Mammary epithelial cell (primary cell): ENCODE measurements at regions of chr3 and their contacts with region 1.

Region 1: DNA sequence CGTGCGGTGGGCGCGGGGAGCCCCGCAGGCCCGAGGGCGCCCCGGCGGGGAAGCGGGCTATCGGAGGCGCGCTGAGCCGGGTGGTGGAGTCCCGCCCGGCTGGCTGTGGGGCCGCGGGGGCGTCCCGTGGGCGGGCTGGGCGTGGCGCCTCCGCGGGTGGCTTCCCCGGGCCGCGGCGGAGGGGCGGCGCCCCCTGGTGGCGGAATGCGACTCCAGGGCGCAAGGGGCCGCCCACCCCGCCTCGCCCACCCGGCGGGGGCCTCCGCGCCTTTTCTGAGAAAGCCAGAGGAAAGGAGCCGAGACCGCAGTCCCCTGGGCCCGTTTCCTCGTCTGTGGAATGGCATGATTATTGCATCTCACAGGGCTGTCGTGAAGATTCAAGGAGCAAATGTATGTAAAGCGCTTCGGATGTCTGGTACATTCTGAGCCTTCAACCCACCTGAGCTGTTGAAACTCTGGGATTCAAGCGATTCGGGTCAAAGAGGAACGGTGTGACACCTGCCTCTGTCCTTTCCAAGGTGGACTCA is 31.9 kb upstream of the RAB6B start:
- DNase-seq: no peak
- H3K4me3 ChIP-seq: peak overlapping the region in 2 of 3 experiments; percentile 17 to 46
- H3K27ac ChIP-seq: no peak overlapping the region
- H3K4me1 ChIP-seq: peaks cover 10% of the 10 kb centered on the region
- H3K27me3 ChIP-seq: peaks cover 10% of the 10 kb centered on the region
- CTCF ChIP-seq: peak; percentile 37 to 59

Region 2: DNA sequence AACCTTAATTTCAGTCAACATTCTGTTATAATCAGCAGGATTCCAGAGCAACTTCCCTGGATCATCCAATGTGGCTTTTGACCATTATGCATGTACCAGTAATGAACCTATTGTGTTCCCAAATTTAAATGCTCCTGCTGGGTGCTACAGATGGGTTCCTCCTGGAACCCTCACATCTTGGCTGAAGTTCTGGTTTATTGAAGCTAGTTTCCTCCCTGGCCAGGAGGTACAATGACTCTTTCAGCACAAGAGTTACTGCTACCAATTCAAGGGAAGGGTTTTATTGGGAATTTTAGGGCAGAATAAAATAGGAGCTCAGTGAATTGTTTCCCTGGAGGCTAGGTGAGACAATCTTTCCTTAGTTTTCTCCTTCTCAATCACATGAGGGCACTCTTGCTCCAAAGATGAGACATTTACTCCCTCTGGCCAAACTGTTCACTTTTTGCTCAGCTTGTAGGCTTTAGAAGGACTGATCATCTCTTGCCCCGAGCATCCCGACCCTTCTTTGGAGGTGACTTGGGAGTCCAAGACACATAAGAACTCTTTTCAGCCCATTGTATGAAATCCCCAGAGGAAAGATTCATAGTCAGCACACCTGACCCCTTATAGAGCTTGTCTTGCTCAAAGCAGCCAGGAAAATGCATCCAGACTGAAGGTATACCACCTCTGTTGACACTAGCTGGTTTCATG is 1196.6 kb before region 1 on chr3:
- CTCF ChIA-PET with region 1: no interaction called
- dilution Hi-C with region 1: no loop called
- in situ Hi-C with region 1: loop called in 1 of 2 experiments (anchors 25 kb)
- intact Hi-C with region 1: loop called (anchors 2 kb)
- DNase-seq: peak; percentile 41
- H3K4me3 ChIP-seq: no peak overlapping the region
- H3K27ac ChIP-seq: no peak overlapping the region
- H3K4me1 ChIP-seq: no peaks in the 10 kb centered on the region
- H3K27me3 ChIP-seq: peaks cover 8% of the 10 kb centered on the region
- CTCF ChIP-seq: peak; percentile 48 to 59

Region 3: DNA sequence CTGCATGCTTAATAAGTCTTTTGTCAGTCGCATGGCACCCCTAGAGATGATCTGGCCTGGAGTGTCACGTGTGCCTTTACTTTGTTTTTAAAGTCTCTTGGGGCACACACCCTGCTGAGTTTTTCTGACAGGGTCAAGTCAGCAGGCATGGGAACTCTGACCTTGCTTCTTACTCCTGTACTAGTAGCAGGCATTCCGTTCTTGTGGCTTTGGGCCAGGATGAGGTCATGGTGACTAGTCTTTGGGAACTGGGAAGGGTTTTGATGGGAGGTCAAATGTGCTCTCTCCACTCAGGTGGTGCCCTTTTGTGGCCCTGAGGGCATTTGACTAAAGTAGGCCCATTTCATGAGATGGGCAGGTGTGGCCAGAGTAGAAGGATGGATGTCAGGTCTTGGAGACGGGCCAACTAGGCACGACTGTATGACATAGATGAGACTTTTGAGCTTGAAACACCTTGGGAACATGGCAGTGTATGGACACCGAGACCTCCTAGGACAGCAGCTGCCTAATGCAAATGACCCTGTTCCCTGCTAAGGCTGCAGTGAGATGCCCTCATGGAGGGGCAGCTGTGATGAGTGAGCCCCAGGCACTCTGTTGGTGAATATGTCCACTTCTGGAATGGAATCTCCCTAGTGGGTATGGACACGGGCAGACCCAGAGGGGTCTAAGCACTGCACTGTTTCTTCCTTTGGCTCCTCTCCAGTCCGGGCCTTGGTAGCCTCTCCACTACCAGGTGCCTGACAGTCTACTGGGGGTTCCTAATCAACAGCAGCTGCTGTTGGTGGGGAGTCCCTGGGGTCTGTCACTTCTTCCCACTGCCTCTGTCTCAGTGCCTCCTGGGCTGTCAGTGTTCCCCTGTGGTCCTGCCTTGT is 105.6 kb before region 1 on chr3:
- CTCF ChIA-PET with region 1: no interaction called
- dilution Hi-C with region 1: no loop called
- in situ Hi-C with region 1: loop called in 1 of 2 experiments (anchors 10 kb)
- intact Hi-C with region 1: loop called (anchors 5 kb)
- DNase-seq: peak; percentile 89
- H3K4me3 ChIP-seq: no peak overlapping the region
- H3K27ac ChIP-seq: no peak overlapping the region
- H3K4me1 ChIP-seq: peaks cover 36% of the 10 kb centered on the region
- H3K27me3 ChIP-seq: no peaks in the 10 kb centered on the region
- CTCF ChIP-seq: peak; percentile 41 to 53

Region 4: GRCh38 chr3:134059671-134060560 is 132.3 kb after region 1 on chr3:
- CTCF ChIA-PET with region 1: no interaction called
- dilution Hi-C with region 1: no loop called
- in situ Hi-C with region 1: no loop called
- intact Hi-C with region 1: loop called (anchors 1 kb)
- DNase-seq: no peak
- H3K4me3 ChIP-seq: no peak overlapping the region
- H3K27ac ChIP-seq: no peak overlapping the region
- H3K4me1 ChIP-seq: no peaks in the 10 kb centered on the region
- H3K27me3 ChIP-seq: peaks cover 2% of the 10 kb centered on the region
- CTCF ChIP-seq: peak in 1 of 2 donors; percentile 29

Region 5: DNA sequence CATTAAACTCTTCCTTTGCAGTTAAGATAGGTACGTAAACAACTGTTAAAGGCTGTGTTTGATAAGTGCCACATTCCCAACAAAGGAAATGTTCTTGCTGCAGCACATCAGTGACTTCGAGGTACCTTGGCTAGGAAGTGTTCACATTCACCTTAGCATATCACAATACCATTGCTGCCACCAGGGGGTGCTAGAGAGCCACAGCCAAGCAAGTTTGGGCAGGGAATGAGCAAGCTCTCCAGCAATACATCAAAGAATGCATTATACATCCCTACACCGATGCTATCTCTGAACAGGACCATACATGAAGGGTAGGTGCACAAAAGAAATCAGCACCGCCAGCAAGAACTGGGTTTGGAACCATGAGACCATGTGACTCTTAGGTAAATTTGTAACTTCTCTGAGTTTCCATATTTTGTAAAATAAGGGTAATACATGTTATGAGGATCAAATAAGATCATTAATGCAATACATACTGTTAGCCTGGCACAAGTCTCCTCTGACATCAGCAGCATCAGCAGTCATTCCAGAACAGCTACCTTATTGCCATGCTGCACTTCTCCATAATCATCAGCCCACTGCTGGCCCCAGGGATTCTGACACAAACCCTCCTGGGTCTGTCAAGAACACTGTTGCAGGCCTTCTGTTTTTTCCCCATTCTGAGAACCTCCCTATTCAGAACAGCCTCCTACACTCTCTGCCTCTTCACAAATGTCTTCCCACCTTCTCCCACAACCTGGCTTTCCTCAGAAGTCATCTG is 285.5 kb after region 1 on chr3:
- CTCF ChIA-PET with region 1: no interaction called
- dilution Hi-C with region 1: no loop called
- in situ Hi-C with region 1: loop called in 1 of 2 experiments (anchors 25 kb)
- intact Hi-C with region 1: loop called (anchors 1 kb)
- DNase-seq: peak; percentile 83
- H3K4me3 ChIP-seq: no peak overlapping the region
- H3K27ac ChIP-seq: no peak overlapping the region
- H3K4me1 ChIP-seq: peaks cover 33% of the 10 kb centered on the region
- H3K27me3 ChIP-seq: no peaks in the 10 kb centered on the region
- CTCF ChIP-seq: peak; percentile 99 to 100

Region 6: GRCh38 chr3:134373994-134374790 is 446.6 kb after region 1 on chr3 and contains the start of gene AMOTL2:
- CTCF ChIA-PET with region 1: no interaction called
- dilution Hi-C with region 1: no loop called
- in situ Hi-C with region 1: no loop called
- intact Hi-C with region 1: loop called (anchors 10 kb)
- DNase-seq: peak; percentile 94
- H3K4me3 ChIP-seq: peak within 1 kb of the TSS; percentile 76 to 84 (median 79)
- H3K27ac ChIP-seq: peak within 1 kb of the TSS; percentile 80
- H3K4me1 ChIP-seq: peaks cover 60% of the 10 kb centered on the region
- H3K27me3 ChIP-seq: no peaks in the 10 kb centered on the region
- CTCF ChIP-seq: no peak
- total RNA-seq, gene AMOTL2: 116 to 144 TPM

Region 7: GRCh38 chr3:134485718-134486576 is 558.3 kb after region 1 on chr3 and contains the starts of genes ANAPC13 and CEP63:
- CTCF ChIA-PET with region 1: no interaction called
- dilution Hi-C with region 1: loop called (anchors 25 kb)
- in situ Hi-C with region 1: loop called in 1 of 2 experiments (anchors 25 kb)
- intact Hi-C with region 1: no loop called
- DNase-seq: peak; percentile 98
- H3K4me3 ChIP-seq: peak within 1 kb of the TSS; percentile 70 to 90 (median 76)
- H3K27ac ChIP-seq: peak within 1 kb of the TSS; percentile 87
- H3K4me1 ChIP-seq: peaks cover 38% of the 10 kb centered on the region
- H3K27me3 ChIP-seq: no peaks in the 10 kb centered on the region
- CTCF ChIP-seq: no peak
- total RNA-seq, gene ANAPC13: 32.2 to 40.5 TPM
- total RNA-seq, gene CEP63: 7.2 to 25.3 TPM